ENCODE measurements at regions of chr20 and their contacts with region 1.

Region 1: DNA sequence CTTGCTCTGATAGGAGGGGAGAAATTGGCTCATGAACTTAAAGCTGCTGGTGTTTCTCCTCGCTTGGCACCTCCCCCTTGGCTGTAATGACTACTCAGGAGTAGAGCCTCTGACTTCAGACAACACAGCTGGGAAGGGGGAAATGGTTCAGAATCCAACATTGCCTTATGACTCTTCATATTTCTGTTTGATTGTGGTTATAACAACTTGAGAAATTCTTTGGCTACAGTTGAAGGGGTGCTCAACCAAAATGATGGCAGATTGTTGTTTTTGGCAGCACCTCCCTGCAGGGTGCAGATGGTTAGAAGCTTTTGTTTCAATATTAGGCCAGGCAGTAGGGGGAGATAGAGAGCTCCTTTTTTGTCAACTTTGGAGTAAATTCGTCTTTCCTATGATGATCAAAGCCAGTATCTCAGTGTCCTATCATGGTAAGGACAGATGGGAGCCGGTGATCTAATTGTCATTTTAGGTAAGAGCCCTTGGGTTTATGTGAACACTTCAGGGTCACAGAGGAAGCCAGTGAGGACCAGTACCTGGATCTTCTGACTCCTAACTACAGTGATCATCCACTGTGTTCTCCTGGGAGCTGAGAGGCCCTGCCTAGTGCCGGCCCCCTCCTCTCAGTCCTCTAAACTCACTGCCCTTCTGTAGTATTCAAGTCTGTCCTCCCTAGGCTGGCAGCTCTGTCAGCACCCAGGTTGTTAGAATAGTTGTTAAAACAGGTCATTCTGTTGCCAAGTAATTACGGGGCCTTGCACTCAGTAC is 39.9 kb downstream of the RPRD1B start:
- DNase-seq: peak; percentile 28
- ATAC-seq: peak; percentile 83
- H3K4me3 Mint-ChIP-seq: no peak overlapping the region
- H3K27ac Mint-ChIP-seq: peak overlapping the region; percentile 47
- H3K4me1 Mint-ChIP-seq: peaks cover 12% of the 10 kb centered on the region
- H3K27me3 Mint-ChIP-seq: no peaks in the 10 kb centered on the region

Region 2: DNA sequence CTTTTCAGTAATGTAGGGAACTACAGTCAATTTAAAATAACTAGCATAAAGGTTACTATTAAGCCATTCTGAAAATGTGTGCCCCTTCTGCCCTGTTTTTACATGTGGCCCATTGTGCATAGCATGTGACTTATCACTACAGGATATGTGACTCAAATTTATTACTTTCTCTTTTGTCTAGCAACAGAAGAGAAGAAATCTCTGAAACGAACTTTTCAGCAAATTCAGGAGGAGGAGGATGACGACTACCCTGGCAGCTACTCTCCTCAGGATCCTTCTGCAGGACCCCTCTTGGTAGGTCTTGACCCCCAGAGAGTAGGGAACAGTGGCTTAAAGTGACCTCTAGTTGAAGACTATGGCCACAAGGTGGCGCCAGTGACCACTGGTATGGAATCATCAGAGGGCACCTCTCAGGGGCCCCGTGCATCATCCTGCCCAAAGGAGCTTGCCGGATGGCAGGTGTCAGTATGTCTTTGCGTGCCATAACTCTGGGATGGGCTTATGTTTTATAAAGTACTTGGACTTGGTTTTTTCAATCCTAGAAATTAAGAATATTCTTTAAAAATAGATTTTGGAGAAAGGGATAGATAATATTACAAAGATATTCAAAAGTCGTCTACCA is 16.0 kb before region 1 on chr20:
- CTCF ChIA-PET with region 1: interaction called, 51 read pairs
- POLR2A ChIA-PET with region 1: interaction called, 4 read pairs
- intact Hi-C with region 1: no loop called
- DNase-seq: peak; percentile 87
- ATAC-seq: peak; percentile 92
- H3K4me3 Mint-ChIP-seq: peak overlapping the region; percentile 29
- H3K27ac Mint-ChIP-seq: peak overlapping the region; percentile 86
- H3K4me1 Mint-ChIP-seq: peaks cover 34% of the 10 kb centered on the region
- H3K27me3 Mint-ChIP-seq: no peaks in the 10 kb centered on the region

Region 3: GRCh38 chr20:38084400-38084951 is 11.0 kb after region 1 on chr20:
- CTCF ChIA-PET with region 1: interaction called, 15 read pairs
- POLR2A ChIA-PET with region 1: no interaction called
- intact Hi-C with region 1: no loop called
- DNase-seq: no peak
- ATAC-seq: no peak
- H3K4me3 Mint-ChIP-seq: no peak overlapping the region
- H3K27ac Mint-ChIP-seq: no peak overlapping the region
- H3K4me1 Mint-ChIP-seq: peaks cover 2% of the 10 kb centered on the region
- H3K27me3 Mint-ChIP-seq: no peaks in the 10 kb centered on the region

Region 4: DNA sequence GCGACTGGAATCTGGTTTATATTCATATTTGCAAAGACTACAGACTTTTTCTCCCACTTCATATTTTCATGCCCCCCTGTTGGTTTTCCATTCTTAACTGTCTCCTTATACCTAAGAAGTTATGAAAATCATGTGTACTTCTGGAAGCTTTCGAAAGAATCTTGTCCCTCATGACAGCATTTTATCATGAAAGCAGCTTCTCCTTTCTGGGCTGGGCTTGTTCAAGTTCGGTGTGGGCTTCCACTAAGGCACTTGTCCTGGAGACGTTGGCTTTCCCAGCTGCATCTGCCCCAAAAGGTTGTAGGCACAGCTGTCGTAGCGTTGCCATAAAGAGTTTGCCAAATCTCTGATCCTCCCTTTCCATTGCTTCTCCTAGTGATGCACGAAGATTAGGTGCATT is 16.6 kb after region 1 on chr20:
- CTCF ChIA-PET with region 1: interaction called, 15 read pairs
- POLR2A ChIA-PET with region 1: no interaction called
- intact Hi-C with region 1: no loop called
- DNase-seq: no peak
- ATAC-seq: no peak
- H3K4me3 Mint-ChIP-seq: no peak overlapping the region
- H3K27ac Mint-ChIP-seq: no peak overlapping the region
- H3K4me1 Mint-ChIP-seq: peaks cover 24% of the 10 kb centered on the region
- H3K27me3 Mint-ChIP-seq: no peaks in the 10 kb centered on the region

Region 5: GRCh38 chr20:38165089-38165989 is 91.8 kb after region 1 on chr20 and contains the start of gene TGM2:
- CTCF ChIA-PET with region 1: interaction called, 7 read pairs
- POLR2A ChIA-PET with region 1: no interaction called
- intact Hi-C with region 1: loop called (anchors 1 to 5 kb)
- DNase-seq: peak; percentile 68
- ATAC-seq: peak; percentile 77
- H3K4me3 Mint-ChIP-seq: no peak within 1 kb of the TSS
- H3K27ac Mint-ChIP-seq: no peak within 1 kb of the TSS
- H3K4me1 Mint-ChIP-seq: peaks cover 8% of the 10 kb centered on the region
- H3K27me3 Mint-ChIP-seq: peaks cover 20% of the 10 kb centered on the region
- total RNA-seq, gene TGM2: 0.04 to 0.09 TPM

Region 6: GRCh38 chr20:38477747-38478146 is 404.3 kb after region 1 on chr20:
- CTCF ChIA-PET with region 1: no interaction called
- POLR2A ChIA-PET with region 1: no interaction called
- intact Hi-C with region 1: no loop called
- DNase-seq: no peak
- ATAC-seq: no peak
- H3K4me3 Mint-ChIP-seq: no peak overlapping the region
- H3K27ac Mint-ChIP-seq: no peak overlapping the region
- H3K4me1 Mint-ChIP-seq: peaks cover 50% of the 10 kb centered on the region
- H3K27me3 Mint-ChIP-seq: no peaks in the 10 kb centered on the region

Region 7: GRCh38 chr20:38498909-38499308 is 425.4 kb after region 1 on chr20:
- CTCF ChIA-PET with region 1: no interaction called
- POLR2A ChIA-PET with region 1: no interaction called
- intact Hi-C with region 1: no loop called
- DNase-seq: no peak
- ATAC-seq: no peak
- H3K4me3 Mint-ChIP-seq: no peak overlapping the region
- H3K27ac Mint-ChIP-seq: no peak overlapping the region
- H3K4me1 Mint-ChIP-seq: no peaks in the 10 kb centered on the region
- H3K27me3 Mint-ChIP-seq: no peaks in the 10 kb centered on the region